ENCODE measurements at regions of chr1 and their contacts with region 1.

Region 1: GRCh38 chr1:99590578-99591209 is 55.2 kb upstream of the PALMD start:
- DNase-seq: peak; percentile 99
- H3K4me3 ChIP-seq: no peak overlapping the region
- H3K27ac ChIP-seq: peak overlapping the region; percentile 97
- H3K4me1 ChIP-seq: peaks cover 59% of the 10 kb centered on the region
- H3K27me3 ChIP-seq: no peaks in the 10 kb centered on the region
- CTCF ChIP-seq: no peak
- POLR2A ChIP-seq: peak; percentile 61

Region 2: DNA sequence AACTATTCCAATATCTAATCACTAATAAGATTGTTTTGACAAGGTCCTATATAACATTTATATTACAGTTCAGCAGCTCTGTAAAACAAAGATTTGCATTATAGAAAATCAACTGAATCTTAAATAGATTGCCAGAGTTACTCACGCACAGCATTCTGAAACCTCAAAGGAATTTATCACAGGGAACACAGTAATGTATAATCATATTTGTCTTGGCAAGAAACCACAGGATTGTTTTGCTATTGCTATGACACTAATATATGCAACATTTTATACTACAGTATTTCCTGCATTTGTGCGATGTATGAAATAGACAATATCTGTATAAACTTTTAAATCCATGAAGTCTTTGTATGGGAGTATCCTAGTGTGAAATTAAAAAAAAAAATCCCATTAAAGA is 687.4 kb before region 1 on chr1:
- CTCF ChIA-PET with region 1: no interaction called
- POLR2A ChIA-PET with region 1: no interaction called
- dilution Hi-C with region 1: no loop called
- intact Hi-C with region 1: loop called (anchors 5 kb)
- DNase-seq: peak; percentile 91
- H3K4me3 ChIP-seq: no peak overlapping the region
- H3K27ac ChIP-seq: peak overlapping the region; percentile 85
- H3K4me1 ChIP-seq: peaks cover 49% of the 10 kb centered on the region
- H3K27me3 ChIP-seq: no peaks in the 10 kb centered on the region
- CTCF ChIP-seq: no peak
- POLR2A ChIP-seq: no peak

Region 3: GRCh38 chr1:99180343-99180808 is 410.3 kb before region 1 on chr1:
- CTCF ChIA-PET with region 1: interaction called, 5 read pairs
- POLR2A ChIA-PET with region 1: no interaction called
- dilution Hi-C with region 1: no loop called
- intact Hi-C with region 1: loop called (anchors 5 kb)
- DNase-seq: peak; percentile 90
- H3K4me3 ChIP-seq: no peak overlapping the region
- H3K27ac ChIP-seq: no peak overlapping the region
- H3K4me1 ChIP-seq: no peaks in the 10 kb centered on the region
- H3K27me3 ChIP-seq: no peaks in the 10 kb centered on the region
- CTCF ChIP-seq: peak; percentile 57 to 68
- POLR2A ChIP-seq: no peak

Region 4: GRCh38 chr1:99544328-99544727 is 46.4 kb before region 1 on chr1:
- CTCF ChIA-PET with region 1: interaction called, 5 read pairs
- POLR2A ChIA-PET with region 1: no interaction called
- dilution Hi-C with region 1: no loop called
- intact Hi-C with region 1: loop called (anchors 1 kb)
- DNase-seq: peak; percentile 87
- H3K4me3 ChIP-seq: no peak overlapping the region
- H3K27ac ChIP-seq: peak overlapping the region; percentile 54
- H3K4me1 ChIP-seq: peaks cover 49% of the 10 kb centered on the region
- H3K27me3 ChIP-seq: no peaks in the 10 kb centered on the region
- CTCF ChIP-seq: no peak
- POLR2A ChIP-seq: no peak

Region 5: DNA sequence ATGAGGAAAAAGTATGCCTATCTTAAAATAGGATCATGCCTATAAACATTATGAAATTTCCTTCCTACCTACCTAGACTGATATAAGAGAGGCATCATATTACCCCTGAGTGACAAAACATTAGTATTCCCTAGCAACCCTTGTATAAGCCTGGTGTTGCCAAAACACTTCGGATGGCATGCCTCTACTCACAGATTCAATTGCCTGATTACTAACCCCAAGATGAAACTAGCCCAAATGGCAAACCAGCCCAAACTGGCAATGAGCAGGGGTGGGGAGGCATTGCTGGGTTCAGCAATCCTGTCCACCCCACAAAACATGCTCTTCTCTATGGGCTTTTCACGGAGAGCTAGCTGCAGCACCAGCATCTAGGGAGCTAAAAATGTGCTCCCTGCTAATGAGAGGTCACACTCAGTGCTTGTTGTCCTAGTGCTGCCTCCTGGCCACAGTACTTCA is 69.1 kb after region 1 on chr1:
- CTCF ChIA-PET with region 1: no interaction called
- POLR2A ChIA-PET with region 1: no interaction called
- dilution Hi-C with region 1: no loop called
- intact Hi-C with region 1: loop called (anchors 2 kb)
- DNase-seq: peak; percentile 91
- H3K4me3 ChIP-seq: no peak overlapping the region
- H3K27ac ChIP-seq: peak overlapping the region; percentile 62
- H3K4me1 ChIP-seq: peaks cover 81% of the 10 kb centered on the region
- H3K27me3 ChIP-seq: no peaks in the 10 kb centered on the region
- CTCF ChIP-seq: no peak
- POLR2A ChIP-seq: no peak